Activated CD4-positive, alpha-beta memory T cell treated with anti-CD3 and anti-CD28 coated beads for 36 hours (primary cell): ENCODE measurements at regions of chr18 and their contacts with region 1.

Region 1: GRCh38 chr18:35158728-35159450 is 81.9 kb upstream of the ZNF397 start:
- DNase-seq: peak; percentile 59
- H3K4me3 Mint-ChIP-seq: no peak overlapping the region
- H3K27ac Mint-ChIP-seq: peak overlapping the region; percentile 76
- H3K4me1 Mint-ChIP-seq: peaks cover 17% of the 10 kb centered on the region
- H3K27me3 Mint-ChIP-seq: peaks cover 2% of the 10 kb centered on the region

Region 2: DNA sequence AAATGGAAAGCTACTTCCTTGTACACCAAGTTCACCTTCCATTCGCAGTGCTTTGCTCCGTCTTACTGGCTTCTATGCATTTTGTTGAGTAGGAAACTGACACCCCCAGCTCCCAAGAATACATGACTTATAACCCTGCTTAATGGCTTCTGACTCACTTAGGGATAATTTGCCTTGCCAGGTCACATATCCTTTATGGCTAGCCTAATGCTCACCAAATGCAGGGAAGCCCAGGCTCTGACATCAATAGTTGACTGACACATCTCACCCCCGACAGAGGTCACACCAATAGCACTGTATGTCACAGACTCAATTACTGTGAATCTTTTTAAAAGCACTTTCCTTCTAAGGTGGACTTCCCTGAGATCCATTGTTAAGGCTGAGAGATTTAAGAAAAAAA is 301.6 kb before region 1 on chr18:
- CTCF ChIA-PET with region 1: no interaction called
- POLR2A ChIA-PET with region 1: no interaction called
- intact Hi-C with region 1: loop called (anchors 1 kb)
- DNase-seq: no peak
- H3K4me3 Mint-ChIP-seq: no peak overlapping the region
- H3K27ac Mint-ChIP-seq: no peak overlapping the region
- H3K4me1 Mint-ChIP-seq: peaks cover 6% of the 10 kb centered on the region
- H3K27me3 Mint-ChIP-seq: peaks cover 31% of the 10 kb centered on the region

Region 3: DNA sequence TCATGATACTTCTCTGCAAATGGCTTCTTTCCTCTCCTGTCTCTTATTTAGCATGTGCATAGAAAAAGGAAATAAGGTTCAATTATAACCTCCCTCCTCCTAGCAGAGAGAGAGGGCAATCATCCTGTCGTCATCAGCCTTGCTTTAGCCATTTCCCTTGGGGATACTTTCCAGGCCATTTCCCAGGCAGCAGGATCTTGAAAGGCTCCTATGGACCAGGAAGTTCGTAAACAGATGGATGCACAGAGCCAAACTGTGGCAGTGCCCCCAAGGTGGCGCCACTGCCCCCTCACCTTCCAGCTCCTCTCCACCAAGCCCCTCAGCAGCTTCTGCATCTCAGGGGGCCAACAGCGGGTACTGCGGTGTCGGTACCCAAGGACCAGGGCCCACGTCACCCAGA is 291.4 kb before region 1 on chr18:
- CTCF ChIA-PET with region 1: no interaction called
- POLR2A ChIA-PET with region 1: no interaction called
- intact Hi-C with region 1: loop called (anchors 1 kb)
- DNase-seq: peak; percentile 24
- H3K4me3 Mint-ChIP-seq: no peak overlapping the region
- H3K27ac Mint-ChIP-seq: no peak overlapping the region
- H3K4me1 Mint-ChIP-seq: peaks cover 35% of the 10 kb centered on the region
- H3K27me3 Mint-ChIP-seq: peaks cover 12% of the 10 kb centered on the region

Region 4: DNA sequence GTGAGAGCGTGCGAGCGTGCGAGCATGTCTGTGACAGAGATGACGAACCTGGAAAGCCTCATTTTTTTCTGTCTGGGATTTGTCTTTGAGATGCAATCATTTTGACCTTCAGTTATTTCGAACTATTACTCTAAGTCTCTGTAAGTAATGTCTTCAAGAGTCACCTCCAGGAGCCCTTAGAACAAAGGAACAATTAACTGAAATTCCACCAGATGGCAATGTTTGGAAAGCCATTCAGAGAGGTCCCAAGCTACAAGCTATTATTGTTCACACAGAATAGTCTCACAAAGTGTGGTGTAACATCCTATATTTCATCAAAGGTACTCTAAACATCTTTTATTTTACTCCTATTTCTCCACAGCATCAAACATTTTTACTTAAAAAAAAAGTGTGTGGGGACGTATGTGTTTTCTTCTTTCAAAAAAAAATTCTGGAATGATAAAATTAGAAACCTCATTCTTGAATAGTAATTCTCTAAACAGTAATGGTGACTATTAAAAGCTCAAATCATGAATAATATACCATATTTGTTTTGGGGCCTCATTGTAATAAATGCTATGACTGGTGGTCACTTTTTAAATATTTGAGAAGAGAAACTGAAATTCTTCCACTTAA is 152.8 kb before region 1 on chr18:
- CTCF ChIA-PET with region 1: no interaction called
- POLR2A ChIA-PET with region 1: no interaction called
- intact Hi-C with region 1: loop called (anchors 5 kb)
- DNase-seq: no peak
- H3K4me3 Mint-ChIP-seq: no peak overlapping the region
- H3K27ac Mint-ChIP-seq: no peak overlapping the region
- H3K4me1 Mint-ChIP-seq: no peaks in the 10 kb centered on the region
- H3K27me3 Mint-ChIP-seq: no peaks in the 10 kb centered on the region

Region 5: GRCh38 chr18:35029770-35030169 is 129.1 kb before region 1 on chr18:
- CTCF ChIA-PET with region 1: no interaction called
- POLR2A ChIA-PET with region 1: interaction called, 3 read pairs
- intact Hi-C with region 1: loop called (anchors 1 kb)
- DNase-seq: no peak
- H3K4me3 Mint-ChIP-seq: peak overlapping the region; percentile 73
- H3K27ac Mint-ChIP-seq: peak overlapping the region; percentile 95
- H3K4me1 Mint-ChIP-seq: peaks cover 42% of the 10 kb centered on the region
- H3K27me3 Mint-ChIP-seq: no peaks in the 10 kb centered on the region

Region 6: DNA sequence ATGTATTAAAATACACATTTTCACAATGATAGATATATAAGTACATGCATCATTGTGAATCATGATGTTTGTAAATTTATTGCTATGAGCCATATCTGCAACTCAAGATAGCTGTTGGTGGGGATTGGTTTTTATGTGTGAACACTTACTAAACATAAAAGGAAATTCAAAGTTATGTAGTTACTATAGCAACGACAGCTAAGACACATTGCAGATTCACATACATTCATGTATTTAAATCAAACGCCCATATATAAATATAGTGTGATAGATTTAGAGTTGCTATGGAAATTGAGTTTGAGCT is 52.1 kb before region 1 on chr18:
- CTCF ChIA-PET with region 1: no interaction called
- POLR2A ChIA-PET with region 1: no interaction called
- intact Hi-C with region 1: loop called (anchors 5 kb)
- DNase-seq: no peak
- H3K4me3 Mint-ChIP-seq: no peak overlapping the region
- H3K27ac Mint-ChIP-seq: no peak overlapping the region
- H3K4me1 Mint-ChIP-seq: peaks cover 43% of the 10 kb centered on the region
- H3K27me3 Mint-ChIP-seq: no peaks in the 10 kb centered on the region